Ovary (tissue), 10 donors: ENCODE measurements at regions of chr20 and their contacts with region 1.

Region 1: GRCh38 chr20:1083431-1084080 is 34.8 kb upstream of the PSMF1 start:
- DNase-seq: no peak
- H3K4me3 ChIP-seq: no peak overlapping the region
- H3K27ac ChIP-seq: no peak overlapping the region
- H3K4me1 ChIP-seq: no peaks in the 10 kb centered on the region
- H3K27me3 ChIP-seq: no peaks in the 10 kb centered on the region
- CTCF ChIP-seq: no peak
- EP300 ChIP-seq: no peak
- POLR2A ChIP-seq: no peak

Region 2: GRCh38 chr20:1060985-1061384 is 22.6 kb before region 1 on chr20:
- intact Hi-C with region 1: loop called in 1 of 4 experiments (anchors 1 kb)
- DNase-seq: no peak
- H3K4me3 ChIP-seq: no peak overlapping the region
- H3K27ac ChIP-seq: no peak overlapping the region
- H3K4me1 ChIP-seq: no peaks in the 10 kb centered on the region
- H3K27me3 ChIP-seq: no peaks in the 10 kb centered on the region
- CTCF ChIP-seq: no peak
- EP300 ChIP-seq: no peak
- POLR2A ChIP-seq: no peak